A673 (cell line): ENCODE measurements at regions of chr4 and their contacts with region 1.

Region 1: GRCh38 chr4:14816623-14817261 is 185.5 kb upstream of the CPEB2 start:
- DNase-seq: no peak
- H3K4me3 ChIP-seq: no peak overlapping the region
- H3K27ac ChIP-seq: no peak overlapping the region
- H3K4me1 ChIP-seq: no peaks in the 10 kb centered on the region
- H3K27me3 ChIP-seq: no peaks in the 10 kb centered on the region
- CTCF ChIP-seq: no peak

Region 2: GRCh38 chr4:14218641-14219040 is 598.1 kb before region 1 on chr4:
- CTCF ChIA-PET with region 1: no interaction called
- POLR2A ChIA-PET with region 1: interaction called, 15 read pairs
- intact Hi-C with region 1: no loop called
- DNase-seq: peak; percentile 36
- H3K4me3 ChIP-seq: no peak overlapping the region
- H3K27ac ChIP-seq: no peak overlapping the region
- H3K4me1 ChIP-seq: no peaks in the 10 kb centered on the region
- H3K27me3 ChIP-seq: no peaks in the 10 kb centered on the region
- CTCF ChIP-seq: no peak

Region 3: DNA sequence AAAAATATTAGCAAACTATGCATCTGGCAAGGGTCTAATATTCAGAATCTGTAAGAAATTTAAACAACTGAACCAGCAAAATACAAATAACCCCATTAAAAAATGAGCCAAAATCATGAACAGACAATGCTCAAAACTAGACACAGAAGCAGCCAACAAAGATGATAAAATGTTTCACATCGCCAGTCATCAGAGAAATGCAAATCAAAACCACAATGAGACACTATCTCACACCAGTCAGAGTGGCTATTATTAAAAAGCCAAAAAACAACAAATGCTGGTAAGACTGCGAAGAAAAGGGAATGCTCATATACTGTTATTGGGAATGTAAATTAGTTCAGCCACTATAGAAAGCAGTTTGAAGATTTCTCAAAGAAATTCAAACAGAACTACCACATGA is 15.8 kb before region 1 on chr4:
- CTCF ChIA-PET with region 1: no interaction called
- POLR2A ChIA-PET with region 1: no interaction called
- intact Hi-C with region 1: no loop called
- DNase-seq: no peak
- H3K4me3 ChIP-seq: no peak overlapping the region
- H3K27ac ChIP-seq: no peak overlapping the region
- H3K4me1 ChIP-seq: no peaks in the 10 kb centered on the region
- H3K27me3 ChIP-seq: no peaks in the 10 kb centered on the region
- CTCF ChIP-seq: no peak

Region 4: DNA sequence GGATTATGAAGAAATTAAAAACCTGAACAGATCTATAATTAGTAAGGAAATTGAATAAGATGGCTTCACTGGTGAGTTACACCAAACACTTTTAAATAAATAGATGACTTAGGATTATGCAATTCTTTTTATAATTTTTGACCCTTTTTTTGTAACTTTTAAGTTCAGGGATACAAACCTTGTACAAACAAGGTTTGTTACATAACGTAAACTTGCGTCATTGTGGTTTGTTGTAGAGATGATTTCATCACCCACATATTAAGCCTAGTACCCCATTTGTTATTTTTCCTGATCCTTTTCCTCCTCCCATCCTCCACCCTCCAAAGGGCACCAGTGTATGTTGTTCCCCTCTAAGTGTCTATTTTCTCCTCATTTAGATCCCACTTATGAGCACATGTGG is 261.2 kb after region 1 on chr4:
- CTCF ChIA-PET with region 1: no interaction called
- POLR2A ChIA-PET with region 1: no interaction called
- intact Hi-C with region 1: no loop called
- DNase-seq: no peak
- H3K4me3 ChIP-seq: no peak overlapping the region
- H3K27ac ChIP-seq: no peak overlapping the region
- H3K4me1 ChIP-seq: no peaks in the 10 kb centered on the region
- H3K27me3 ChIP-seq: no peaks in the 10 kb centered on the region
- CTCF ChIP-seq: no peak